PC-3 (cell line): ENCODE measurements at regions of chr7 and their contacts with region 1.

Region 1: GRCh38 chr7:14691597-14692203 is 210.9 kb downstream of the DGKB start:
- DNase-seq: peak; percentile 57
- ATAC-seq: peak; percentile 29; the same call in 1 of the 2 replicates
- H3K4me3 ChIP-seq: no peak overlapping the region
- H3K27ac ChIP-seq: no peak overlapping the region
- H3K4me1 ChIP-seq: no peaks in the 10 kb centered on the region
- H3K27me3 ChIP-seq: no peaks in the 10 kb centered on the region
- CTCF ChIP-seq: peak; percentile 93

Region 2: GRCh38 chr7:14483663-14484062 is 208.0 kb before region 1 on chr7:
- CTCF ChIA-PET with region 1: interaction called, 14 read pairs
- POLR2A ChIA-PET with region 1: no interaction called
- intact Hi-C with region 1: loop called (anchors 1 kb)
- DNase-seq: peak; percentile 37
- ATAC-seq: peak; percentile 71
- H3K4me3 ChIP-seq: no peak overlapping the region
- H3K27ac ChIP-seq: no peak overlapping the region
- H3K4me1 ChIP-seq: no peaks in the 10 kb centered on the region
- H3K27me3 ChIP-seq: no peaks in the 10 kb centered on the region
- CTCF ChIP-seq: peak; percentile 59

Region 3: DNA sequence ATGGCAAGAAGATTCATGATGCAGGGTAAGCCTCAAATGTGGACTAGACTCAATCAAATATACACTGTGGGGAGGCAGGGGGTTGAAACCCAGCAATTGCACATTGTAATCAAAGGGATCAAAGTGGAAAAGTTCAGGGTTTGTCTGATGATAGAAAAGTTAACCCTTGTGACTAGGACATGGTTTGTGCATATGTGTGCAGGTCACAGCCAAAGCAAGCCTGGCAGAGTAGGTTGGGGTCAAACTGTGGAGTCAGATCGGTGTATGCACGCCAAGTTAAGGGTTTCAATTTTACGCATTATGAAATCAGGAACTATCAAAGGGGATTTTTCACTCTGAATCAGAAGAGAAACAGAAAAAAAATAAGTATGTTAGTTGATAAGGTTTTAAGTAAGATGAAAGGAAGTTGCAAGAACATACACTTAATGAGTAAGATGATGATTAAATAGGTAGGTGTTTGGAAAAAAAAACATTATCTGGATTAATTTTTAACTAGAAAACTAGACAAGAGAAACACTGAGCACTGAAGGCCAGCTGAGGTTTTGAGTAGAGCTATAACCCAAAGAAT is 22.5 kb after region 1 on chr7:
- CTCF ChIA-PET with region 1: no interaction called
- POLR2A ChIA-PET with region 1: no interaction called
- intact Hi-C with region 1: no loop called
- DNase-seq: no peak
- ATAC-seq: no peak
- H3K4me3 ChIP-seq: no peak overlapping the region
- H3K27ac ChIP-seq: no peak overlapping the region
- H3K4me1 ChIP-seq: peaks cover 9% of the 10 kb centered on the region
- H3K27me3 ChIP-seq: no peaks in the 10 kb centered on the region
- CTCF ChIP-seq: no peak

Region 4: GRCh38 chr7:15291702-15292101 is 600.0 kb after region 1 on chr7:
- CTCF ChIA-PET with region 1: no interaction called
- POLR2A ChIA-PET with region 1: no interaction called
- intact Hi-C with region 1: loop called (anchors 10 kb)
- DNase-seq: no peak
- ATAC-seq: peak; percentile 46; the same call in 1 of the 2 replicates
- H3K4me3 ChIP-seq: no peak overlapping the region
- H3K27ac ChIP-seq: no peak overlapping the region
- H3K4me1 ChIP-seq: no peaks in the 10 kb centered on the region
- H3K27me3 ChIP-seq: no peaks in the 10 kb centered on the region
- CTCF ChIP-seq: no peak

Region 5: DNA sequence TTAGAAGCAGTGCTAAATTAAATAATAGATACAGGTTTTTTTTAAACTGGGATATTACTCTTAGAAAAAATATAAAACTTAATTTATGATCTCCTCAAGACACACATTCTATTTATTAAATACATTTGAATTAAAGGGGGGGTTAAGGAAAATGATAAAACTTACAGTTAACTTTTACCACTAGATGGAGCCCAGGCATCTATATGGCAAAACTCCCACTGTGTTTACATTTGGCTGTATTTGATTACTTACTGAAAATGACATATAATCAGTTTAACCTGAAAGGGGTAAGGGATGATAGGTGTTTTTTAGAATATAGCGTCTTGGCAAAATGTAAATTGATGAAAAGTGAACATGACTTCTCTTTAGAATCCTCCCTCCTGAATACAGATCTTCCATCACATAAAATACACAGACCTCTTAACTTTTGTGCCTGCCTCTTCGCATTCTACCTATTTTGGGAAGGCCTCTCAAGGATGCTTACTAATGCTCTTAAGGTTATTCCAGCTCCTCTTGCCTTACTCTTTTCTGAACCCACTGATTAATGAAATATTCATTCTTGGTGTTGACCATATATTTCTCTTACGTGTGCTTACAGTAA is 634.4 kb after region 1 on chr7:
- CTCF ChIA-PET with region 1: no interaction called
- POLR2A ChIA-PET with region 1: no interaction called
- intact Hi-C with region 1: no loop called
- DNase-seq: peak; percentile 59
- ATAC-seq: peak; percentile 53; the same call in 1 of the 2 replicates
- H3K4me3 ChIP-seq: no peak overlapping the region
- H3K27ac ChIP-seq: no peak overlapping the region
- H3K4me1 ChIP-seq: no peaks in the 10 kb centered on the region
- H3K27me3 ChIP-seq: peaks cover 5% of the 10 kb centered on the region
- CTCF ChIP-seq: peak; percentile 77